Activated CD4-positive, alpha-beta T cell treated with anti-CD3 and anti-CD28 coated beads, Interleukin-2, amount 10 ng/mL, durations not matched to agents 24 days and 14 days (primary cell): ENCODE measurements at regions of chr6 and their contacts with region 1.

Region 1: DNA sequence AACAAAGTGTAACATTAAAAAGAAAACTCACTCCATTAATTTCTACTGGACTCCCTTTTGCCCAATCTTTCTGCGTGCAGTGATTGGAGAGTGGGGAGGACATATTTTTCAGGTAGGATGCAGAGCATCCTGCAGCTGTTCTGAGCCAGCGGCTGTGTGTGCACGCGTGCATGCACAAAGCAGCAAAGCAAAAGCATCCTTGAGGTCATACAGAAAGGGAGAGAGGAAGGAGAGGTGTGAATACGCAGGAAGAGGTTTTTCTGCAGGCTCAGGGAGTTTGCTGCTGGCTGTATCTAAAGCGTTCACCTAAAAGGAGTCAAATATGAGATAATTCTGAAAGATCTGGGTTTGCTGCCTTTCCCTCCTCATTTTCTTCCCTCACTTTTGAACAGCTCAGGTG is 108.4 kb downstream of the HUS1B start:
- DNase-seq: peak; percentile 84
- H3K4me3 Mint-ChIP-seq: peak overlapping the region; percentile 67
- H3K27ac Mint-ChIP-seq: peak overlapping the region; percentile 87
- H3K4me1 Mint-ChIP-seq: peaks cover 53% of the 10 kb centered on the region
- H3K27me3 Mint-ChIP-seq: no peaks in the 10 kb centered on the region

Region 2: DNA sequence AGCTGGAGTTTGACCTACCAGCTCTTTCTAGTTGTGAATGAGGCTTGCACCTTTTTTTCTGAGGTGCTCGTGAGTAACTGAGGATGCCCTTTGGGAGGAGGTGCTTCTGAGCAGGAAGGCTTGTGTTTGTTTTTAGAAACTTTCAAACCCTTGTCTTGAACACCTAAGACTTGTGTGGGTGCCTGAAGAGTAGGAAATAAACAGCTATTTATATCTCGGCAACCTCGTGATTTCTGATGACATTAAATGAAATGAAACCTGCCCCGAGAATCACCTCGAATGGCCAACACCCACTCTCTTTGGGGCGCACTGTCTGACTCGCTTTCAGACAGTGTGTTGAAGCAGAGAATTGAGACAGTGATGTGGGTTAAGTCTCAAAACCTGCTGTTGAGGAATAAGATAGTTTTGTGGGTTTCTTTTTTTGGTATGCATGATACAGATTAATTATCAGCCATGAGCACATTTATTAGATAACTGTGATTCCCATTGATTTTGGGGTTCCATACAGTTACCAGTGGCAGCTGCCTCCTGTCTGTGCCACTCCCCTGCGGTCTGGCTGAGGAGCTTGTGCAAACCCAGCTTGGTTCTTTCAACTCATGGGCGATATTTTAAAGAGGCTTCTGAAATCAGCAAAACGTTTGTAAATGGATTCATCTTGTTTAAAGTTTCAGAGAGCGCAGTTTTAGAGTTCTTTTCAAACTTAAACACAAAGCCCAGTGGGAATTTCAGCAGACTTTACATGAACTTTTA is 148.6 kb before region 1 on chr6:
- intact Hi-C with region 1: loop called (anchors 2 kb)
- DNase-seq: peak; percentile 87
- H3K4me3 Mint-ChIP-seq: peak overlapping the region; percentile 80
- H3K27ac Mint-ChIP-seq: peak overlapping the region; percentile 87
- H3K4me1 Mint-ChIP-seq: peaks cover 88% of the 10 kb centered on the region
- H3K27me3 Mint-ChIP-seq: no peaks in the 10 kb centered on the region

Region 3: GRCh38 chr6:498795-499231 is 49.7 kb before region 1 on chr6:
- intact Hi-C with region 1: loop called (anchors 2 kb)
- DNase-seq: peak; percentile 88
- H3K4me3 Mint-ChIP-seq: peak overlapping the region; percentile 78
- H3K27ac Mint-ChIP-seq: peak overlapping the region; percentile 92
- H3K4me1 Mint-ChIP-seq: peaks cover 73% of the 10 kb centered on the region
- H3K27me3 Mint-ChIP-seq: no peaks in the 10 kb centered on the region

Region 4: DNA sequence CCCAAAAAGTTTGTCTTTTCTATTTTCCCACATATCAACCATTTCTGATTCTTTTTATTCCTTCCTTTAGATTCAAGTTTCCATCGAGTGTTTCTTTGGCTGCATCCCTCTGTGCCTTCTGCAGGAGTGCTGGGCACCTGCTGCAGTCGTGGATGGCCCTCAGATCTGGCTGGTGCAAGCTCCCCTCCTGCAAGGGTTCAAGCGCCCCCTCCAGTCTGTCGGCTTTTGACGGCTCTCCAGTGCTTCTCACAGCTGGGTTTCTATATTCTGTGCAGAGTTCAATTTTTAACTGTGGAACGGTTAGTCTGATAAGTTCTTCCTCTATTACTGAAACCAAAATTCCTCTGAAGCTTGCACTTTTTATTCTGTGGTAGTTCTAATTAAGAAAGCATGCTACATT is 23.7 kb before region 1 on chr6:
- intact Hi-C with region 1: loop called (anchors 2 kb)
- DNase-seq: peak; percentile 76
- H3K4me3 Mint-ChIP-seq: no peak overlapping the region
- H3K27ac Mint-ChIP-seq: peak overlapping the region; percentile 71
- H3K4me1 Mint-ChIP-seq: peaks cover 18% of the 10 kb centered on the region
- H3K27me3 Mint-ChIP-seq: no peaks in the 10 kb centered on the region

Region 5: GRCh38 chr6:786946-787763 is 238.6 kb after region 1 on chr6:
- intact Hi-C with region 1: no loop called
- DNase-seq: peak; percentile 68
- H3K4me3 Mint-ChIP-seq: no peak overlapping the region
- H3K27ac Mint-ChIP-seq: peak overlapping the region; percentile 81
- H3K4me1 Mint-ChIP-seq: peaks cover 16% of the 10 kb centered on the region
- H3K27me3 Mint-ChIP-seq: peaks cover 10% of the 10 kb centered on the region